Calu3 (cell line): ENCODE measurements at regions of chr2 and their contacts with region 1.

Region 1: GRCh38 chr2:33782395-33783230 is 183.5 kb upstream of the FAM98A start:
- DNase-seq: no peak
- H3K4me3 Mint-ChIP-seq: no peak overlapping the region
- H3K27ac Mint-ChIP-seq: no peak overlapping the region
- H3K4me1 Mint-ChIP-seq: no peaks in the 10 kb centered on the region
- H3K27me3 Mint-ChIP-seq: no peaks in the 10 kb centered on the region
- CTCF ChIP-seq: no peak

Region 2: DNA sequence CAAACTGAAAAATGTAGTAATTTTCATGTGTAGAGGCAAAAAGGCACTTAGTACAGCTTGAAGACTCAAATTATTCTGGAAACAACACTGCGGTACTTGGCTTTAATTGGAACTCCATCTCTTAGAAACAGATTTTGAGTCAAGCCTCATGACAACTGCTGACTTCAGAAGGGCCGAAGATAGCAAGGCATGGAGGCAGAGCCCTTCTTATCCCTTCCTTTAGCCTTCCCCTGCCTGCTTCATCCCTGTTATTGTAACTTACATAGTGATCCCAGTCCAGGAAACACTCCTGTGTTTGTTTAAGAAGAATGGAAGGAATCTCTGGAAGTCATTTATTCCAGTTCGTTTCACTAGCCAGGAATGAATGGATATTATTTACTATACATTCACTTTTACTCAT is 72.7 kb before region 1 on chr2:
- CTCF ChIA-PET with region 1: no interaction called
- intact Hi-C with region 1: no loop called
- DNase-seq: no peak
- H3K4me3 Mint-ChIP-seq: no peak overlapping the region
- H3K27ac Mint-ChIP-seq: no peak overlapping the region
- H3K4me1 Mint-ChIP-seq: no peaks in the 10 kb centered on the region
- H3K27me3 Mint-ChIP-seq: no peaks in the 10 kb centered on the region
- CTCF ChIP-seq: no peak

Region 3: GRCh38 chr2:33796511-33796910 is 13.9 kb after region 1 on chr2:
- CTCF ChIA-PET with region 1: interaction called, 12 read pairs
- intact Hi-C with region 1: no loop called
- DNase-seq: no peak
- H3K4me3 Mint-ChIP-seq: no peak overlapping the region
- H3K27ac Mint-ChIP-seq: no peak overlapping the region
- H3K4me1 Mint-ChIP-seq: no peaks in the 10 kb centered on the region
- H3K27me3 Mint-ChIP-seq: no peaks in the 10 kb centered on the region
- CTCF ChIP-seq: no peak